Caco-2 (cell line): ENCODE measurements at regions of chr5 and their contacts with region 1.

Region 1: DNA sequence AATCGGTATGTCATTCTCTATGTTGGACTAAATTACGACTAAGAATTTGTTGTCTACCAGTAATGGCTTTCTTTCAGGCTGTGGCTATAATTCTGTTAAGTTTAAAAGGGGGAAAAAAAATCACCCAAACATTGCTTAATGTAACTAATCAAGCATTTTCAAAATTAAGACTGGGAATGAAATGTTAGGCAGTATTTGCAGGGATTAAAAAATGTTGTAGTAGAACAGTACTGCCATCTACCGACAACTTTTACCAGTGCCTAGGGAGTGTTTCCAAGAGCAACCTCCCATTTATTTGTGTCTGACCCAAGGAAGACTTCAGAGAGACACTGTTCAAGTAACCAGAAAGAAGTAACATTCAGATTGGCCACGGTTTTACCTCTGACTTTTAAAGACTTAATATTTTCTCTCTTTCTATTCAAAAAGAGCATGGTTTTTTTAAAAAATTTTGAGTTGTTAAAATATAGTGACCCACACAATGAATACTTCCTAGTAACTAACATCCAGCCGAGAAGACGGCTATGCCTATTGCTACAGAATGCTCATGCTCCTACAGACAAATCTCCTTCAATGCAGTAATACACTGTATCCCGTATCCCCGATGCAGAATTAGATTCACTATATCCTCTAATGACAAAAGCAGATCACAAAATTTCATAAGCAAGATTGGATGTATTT is 92.4 kb downstream of the ARL15 start:
- DNase-seq: peak in 1 of 2 experiments; percentile 63
- H3K4me3 ChIP-seq: no peak overlapping the region
- H3K4me3 Mint-ChIP-seq: no peak overlapping the region
- H3K27ac Mint-ChIP-seq: no peak overlapping the region
- H3K4me1 ChIP-seq: no peaks in the 10 kb centered on the region; the same call in 1 of the 2 replicates
- H3K4me1 Mint-ChIP-seq: peaks cover 27% of the 10 kb centered on the region
- H3K27me3 ChIP-seq: no peaks in the 10 kb centered on the region
- H3K27me3 Mint-ChIP-seq: no peaks in the 10 kb centered on the region
- CTCF ChIP-seq: peak; percentile 49 to 73

Region 2: GRCh38 chr5:53425598-53426511 is 792.1 kb before region 1 on chr5:
- CTCF ChIA-PET with region 1: no interaction called
- POLR2A ChIA-PET with region 1: no interaction called
- intact Hi-C with region 1: loop called (anchors 5 kb)
- DNase-seq: peak; percentile 47 to 54
- H3K4me3 ChIP-seq: no peak overlapping the region
- H3K4me3 Mint-ChIP-seq: no peak overlapping the region
- H3K27ac Mint-ChIP-seq: no peak overlapping the region
- H3K4me1 ChIP-seq: peaks cover 8% of the 10 kb centered on the region; the same call in 1 of the 2 replicates
- H3K4me1 Mint-ChIP-seq: peaks cover 23% of the 10 kb centered on the region
- H3K27me3 ChIP-seq: no peaks in the 10 kb centered on the region
- H3K27me3 Mint-ChIP-seq: peaks cover 12% of the 10 kb centered on the region
- CTCF ChIP-seq: peak; percentile 29 to 45

Region 3: GRCh38 chr5:53874409-53874808 is 343.6 kb before region 1 on chr5:
- CTCF ChIA-PET with region 1: no interaction called
- POLR2A ChIA-PET with region 1: no interaction called
- intact Hi-C with region 1: loop called (anchors 2 kb)
- DNase-seq: peak; percentile 34 to 46
- H3K4me3 ChIP-seq: no peak overlapping the region
- H3K4me3 Mint-ChIP-seq: no peak overlapping the region
- H3K27ac Mint-ChIP-seq: no peak overlapping the region
- H3K4me1 ChIP-seq: no peaks in the 10 kb centered on the region
- H3K4me1 Mint-ChIP-seq: no peaks in the 10 kb centered on the region
- H3K27me3 ChIP-seq: no peaks in the 10 kb centered on the region
- H3K27me3 Mint-ChIP-seq: no peaks in the 10 kb centered on the region
- CTCF ChIP-seq: peak; percentile 14

Region 4: DNA sequence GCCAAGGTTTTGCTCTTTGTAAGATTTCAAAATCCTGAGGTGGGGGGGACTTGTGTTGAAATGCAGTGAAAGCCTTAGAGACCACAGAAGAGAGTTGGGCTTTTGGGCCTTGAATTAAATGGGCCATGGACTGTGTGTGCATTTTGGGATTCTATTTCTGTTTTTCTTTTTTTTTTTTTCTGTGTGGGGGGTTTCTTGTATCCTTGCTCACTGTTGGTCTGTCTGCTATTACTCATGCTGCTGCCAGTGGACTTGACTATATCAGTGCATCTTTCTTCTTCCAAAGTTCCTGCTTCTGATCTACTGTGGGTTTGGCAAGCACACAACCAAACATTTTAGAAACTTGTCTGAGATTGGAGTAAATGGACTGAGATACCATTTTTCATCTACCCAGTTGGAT is 252.5 kb before region 1 on chr5:
- CTCF ChIA-PET with region 1: no interaction called
- POLR2A ChIA-PET with region 1: no interaction called
- intact Hi-C with region 1: loop called (anchors 1 kb)
- DNase-seq: no peak
- H3K4me3 ChIP-seq: no peak overlapping the region
- H3K4me3 Mint-ChIP-seq: no peak overlapping the region
- H3K27ac Mint-ChIP-seq: no peak overlapping the region
- H3K4me1 ChIP-seq: no peaks in the 10 kb centered on the region
- H3K4me1 Mint-ChIP-seq: no peaks in the 10 kb centered on the region
- H3K27me3 ChIP-seq: no peaks in the 10 kb centered on the region
- H3K27me3 Mint-ChIP-seq: no peaks in the 10 kb centered on the region
- CTCF ChIP-seq: no peak

Region 5: DNA sequence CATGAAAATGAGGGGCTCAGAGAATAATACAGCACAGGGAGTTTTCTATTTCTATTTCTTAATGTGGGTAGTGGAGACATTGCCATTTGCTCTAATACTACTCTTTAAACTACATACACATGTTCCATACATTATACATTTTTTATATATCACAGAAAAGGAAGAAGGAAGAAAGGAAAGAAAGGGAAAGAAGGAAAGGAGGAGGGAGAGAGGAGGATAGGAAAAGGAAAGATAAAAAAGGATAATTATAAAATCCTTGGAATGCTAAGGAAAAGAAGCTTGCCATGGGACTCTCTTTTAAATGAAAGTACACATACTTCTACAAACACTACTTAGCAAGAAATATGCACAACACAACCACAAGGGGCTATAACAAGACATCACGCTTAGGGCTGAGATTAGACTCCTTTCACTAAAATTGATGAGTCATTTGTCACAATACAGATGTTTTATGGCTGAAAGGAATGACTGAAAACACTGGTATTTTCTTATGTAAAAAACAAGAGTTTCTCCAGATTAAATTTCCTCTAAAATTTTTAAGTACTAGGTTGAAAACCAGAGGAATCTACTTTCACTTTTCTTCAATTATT is 127.4 kb before region 1 on chr5:
- CTCF ChIA-PET with region 1: no interaction called
- POLR2A ChIA-PET with region 1: no interaction called
- intact Hi-C with region 1: loop called (anchors 10 kb)
- DNase-seq: no peak
- H3K4me3 ChIP-seq: no peak overlapping the region
- H3K4me3 Mint-ChIP-seq: no peak overlapping the region
- H3K27ac Mint-ChIP-seq: peak overlapping the region; percentile 81
- H3K4me1 ChIP-seq: peaks cover 14% of the 10 kb centered on the region; the same call in 1 of the 2 replicates
- H3K4me1 Mint-ChIP-seq: peaks cover 15% of the 10 kb centered on the region
- H3K27me3 ChIP-seq: no peaks in the 10 kb centered on the region
- H3K27me3 Mint-ChIP-seq: no peaks in the 10 kb centered on the region
- CTCF ChIP-seq: peak in 1 of 2 experiments; percentile 20